ENCODE measurements at regions of chr12 and their contacts with region 1.

Region 1: DNA sequence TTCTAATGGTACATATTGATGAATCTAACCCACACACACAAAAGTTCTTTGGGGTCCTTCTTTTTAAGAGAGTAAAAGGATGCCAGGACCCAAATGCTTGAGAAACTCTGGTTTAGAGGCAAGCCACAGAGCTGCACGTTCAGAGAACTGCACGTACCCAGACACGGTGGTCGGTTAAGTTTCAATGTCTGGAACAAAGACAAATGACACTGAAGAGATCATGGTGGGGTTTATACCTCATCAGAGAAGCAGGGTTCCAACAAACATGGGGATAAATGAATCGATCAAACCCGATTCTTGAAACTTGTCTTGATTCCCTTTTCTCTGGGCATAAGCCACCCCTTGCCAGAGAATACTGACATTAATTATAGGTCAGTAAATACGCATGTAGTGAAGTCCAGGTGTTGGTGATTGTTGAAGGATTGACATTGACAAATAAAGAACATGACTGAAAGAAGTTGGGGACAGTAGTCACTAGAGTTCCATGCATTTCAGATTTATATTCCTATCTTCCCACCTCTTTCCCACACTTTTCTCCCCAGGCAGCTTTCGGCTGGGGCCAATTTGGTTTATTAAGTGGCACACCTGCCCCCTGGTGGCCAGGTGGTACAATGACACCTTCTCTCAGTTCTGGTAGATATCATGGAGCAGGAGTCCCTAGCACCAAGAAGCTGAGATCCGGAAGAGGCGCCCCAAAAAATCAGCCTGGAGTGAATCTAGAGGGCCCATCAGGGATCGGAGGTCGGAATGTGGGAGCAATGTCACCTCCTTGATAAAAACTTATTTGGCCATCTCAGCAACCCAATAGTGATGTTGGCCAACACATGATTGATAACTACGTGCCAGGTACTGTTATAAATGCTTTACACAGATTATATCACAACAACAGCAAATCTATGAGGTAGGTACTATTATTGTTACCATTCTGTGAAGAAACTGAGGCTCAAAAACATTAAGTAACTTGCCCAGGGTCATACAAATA is 17.8 kb upstream of the HDAC7 start:
- DNase-seq: no peak
- H3K4me3 ChIP-seq: no peak overlapping the region
- H3K27ac ChIP-seq: no peak overlapping the region
- H3K4me1 ChIP-seq: peaks cover 0 to 38% (median 4%) of the 10 kb centered on the region in 3 donors
- H3K27me3 ChIP-seq: no peaks in the 10 kb centered on the region
- CTCF ChIP-seq: peak; percentile 91 to 98 (median 95)
- POLR2A ChIP-seq: no peak

Region 2: DNA sequence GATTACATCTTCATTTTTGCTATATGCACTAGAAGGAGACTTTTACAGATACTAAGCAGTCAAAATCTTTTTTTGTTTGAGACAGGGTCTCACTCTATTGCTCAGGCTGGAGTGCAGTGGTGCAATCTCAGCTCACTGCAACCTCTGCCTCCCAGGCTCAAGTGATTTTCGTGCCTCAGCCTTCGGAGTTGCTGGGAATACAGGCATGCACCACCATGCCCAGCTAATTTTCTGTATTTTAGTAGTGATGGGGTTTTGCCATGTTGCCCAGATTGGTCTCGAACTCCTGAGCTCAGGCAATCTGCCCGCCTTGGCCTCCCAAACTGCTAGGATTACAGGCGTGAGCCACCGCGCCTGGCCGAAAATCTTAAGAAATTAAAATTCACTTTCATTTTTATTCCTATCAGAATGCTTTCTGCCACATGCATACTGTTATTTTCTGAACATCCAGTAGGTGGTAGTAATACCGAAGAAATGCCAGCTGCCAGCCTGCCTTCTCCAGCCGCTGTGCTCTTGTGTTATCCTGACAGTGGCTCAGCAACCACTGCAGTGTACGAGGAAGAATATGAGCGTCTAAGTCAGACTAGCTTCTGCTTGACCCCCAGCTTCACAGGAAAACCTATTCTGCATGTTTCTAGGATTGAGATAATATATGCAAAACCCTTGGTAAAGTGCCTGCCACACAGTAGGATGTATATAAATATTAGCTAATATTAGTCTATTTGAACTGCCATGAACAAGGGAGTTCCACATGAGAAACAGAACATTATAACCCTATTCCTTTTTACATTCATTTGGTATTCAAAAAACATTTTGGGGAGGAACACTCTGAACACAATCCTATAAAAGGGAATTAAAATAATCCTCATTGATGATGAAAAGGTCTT is 185.9 kb before region 1 on chr12:
- intact Hi-C with region 1: no loop called
- DNase-seq: no peak
- H3K4me3 ChIP-seq: peak overlapping the region in 1 of 4 donors; percentile 31
- H3K27ac ChIP-seq: no peak overlapping the region
- H3K4me1 ChIP-seq: peaks cover 4 to 20% (median 6%) of the 10 kb centered on the region in 3 donors
- H3K27me3 ChIP-seq: no peaks in the 10 kb centered on the region
- CTCF ChIP-seq: peak; percentile 56 to 77 (median 69)
- POLR2A ChIP-seq: no peak

Region 3: GRCh38 chr12:47715393-47715876 is 122.0 kb before region 1 on chr12:
- intact Hi-C with region 1: loop called (anchors 5 kb)
- DNase-seq: no peak
- H3K4me3 ChIP-seq: peak overlapping the region in 1 of 4 donors; percentile 34
- H3K27ac ChIP-seq: peak overlapping the region in 3 of 4 donors; percentile 86 to 89 (median 89)
- H3K4me1 ChIP-seq: peaks cover 26 to 51% (median 41%) of the 10 kb centered on the region in 3 donors
- H3K27me3 ChIP-seq: no peaks in the 10 kb centered on the region
- CTCF ChIP-seq: peak; percentile 68 to 84 (median 82)
- POLR2A ChIP-seq: no peak

Region 4: DNA sequence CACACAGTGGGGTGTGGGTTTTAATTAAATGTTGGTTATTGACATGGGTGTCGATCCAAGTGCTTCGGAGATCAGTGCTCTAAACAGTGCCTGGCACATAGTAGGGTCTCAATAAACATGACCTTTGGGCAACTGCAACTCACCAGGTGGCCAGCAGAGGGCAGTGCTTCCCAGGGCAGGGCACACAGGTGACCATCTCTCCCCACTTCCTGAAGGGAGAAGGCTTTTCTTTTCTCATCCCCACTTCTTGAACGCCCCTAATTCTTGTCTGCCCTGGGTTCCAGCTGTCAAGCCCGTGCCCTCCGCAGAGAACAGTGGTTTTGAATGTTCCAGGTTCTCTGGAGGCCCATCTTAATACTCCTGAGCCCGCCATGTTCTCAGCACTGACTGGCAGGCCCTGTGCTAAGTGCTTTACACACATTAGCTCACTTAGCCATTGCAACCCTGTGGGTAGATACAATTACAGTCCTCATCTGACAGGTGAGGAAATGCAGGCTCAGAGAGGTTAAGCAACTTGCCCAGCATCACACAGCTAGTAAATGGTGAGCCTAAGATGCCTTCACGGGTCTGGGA is 95.1 kb before region 1 on chr12:
- intact Hi-C with region 1: loop called (anchors 10 kb)
- DNase-seq: no peak
- H3K4me3 ChIP-seq: no peak overlapping the region
- H3K27ac ChIP-seq: peak overlapping the region in 1 of 4 donors; percentile 3
- H3K4me1 ChIP-seq: peaks cover 30 to 68% (median 33%) of the 10 kb centered on the region in 3 donors
- H3K27me3 ChIP-seq: no peaks in the 10 kb centered on the region
- CTCF ChIP-seq: peak; percentile 95 to 99 (median 98)
- POLR2A ChIP-seq: no peak